Activated CD4-positive, alpha-beta memory T cell treated with anti-CD3 and anti-CD28 coated beads for 36 hours (primary cell): ENCODE measurements at regions of chr14 and their contacts with region 1.

Region 1: DNA sequence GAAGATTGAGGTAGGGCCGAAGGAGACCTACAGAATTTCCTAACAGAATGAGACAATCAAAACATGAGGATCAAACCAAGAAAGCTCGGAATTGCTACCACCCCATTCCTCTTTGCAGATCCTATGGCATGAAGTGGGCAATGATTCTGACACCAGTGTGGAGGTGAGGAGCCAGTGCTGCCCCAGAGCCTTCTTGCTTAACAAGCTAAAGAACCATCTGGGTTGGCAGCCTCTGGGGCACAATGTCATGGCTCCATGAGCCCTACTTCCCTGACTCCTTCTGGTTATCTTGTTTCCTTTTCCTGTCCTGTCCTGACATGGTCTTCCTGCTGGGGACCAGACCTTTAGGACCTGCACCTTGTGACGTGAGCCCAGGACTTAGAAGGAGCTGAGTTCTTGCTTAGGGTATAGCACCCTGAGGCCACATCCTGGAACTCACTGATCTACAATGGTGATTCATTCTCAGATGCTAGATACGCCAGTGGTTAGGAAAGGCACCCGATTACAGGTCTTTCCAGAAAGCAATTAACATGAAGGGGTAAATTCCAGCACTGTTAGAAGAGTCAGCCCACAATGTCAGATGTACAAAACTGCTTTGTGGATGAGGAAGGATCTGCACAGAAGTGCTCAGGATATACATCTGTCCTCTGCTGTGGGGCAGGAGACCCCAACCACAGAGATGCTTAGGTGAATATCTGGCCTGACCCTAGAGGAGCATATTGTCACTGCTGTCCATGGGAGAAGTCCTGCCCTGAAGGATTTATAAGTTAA is 324.2 kb downstream of the ZFP36L1 start:
- DNase-seq: peak; percentile 59
- H3K4me3 Mint-ChIP-seq: no peak overlapping the region
- H3K27ac Mint-ChIP-seq: no peak overlapping the region
- H3K4me1 Mint-ChIP-seq: peaks cover 25% of the 10 kb centered on the region
- H3K27me3 Mint-ChIP-seq: no peaks in the 10 kb centered on the region

Region 2: GRCh38 chr14:68482772-68483395 is 14.3 kb after region 1 on chr14:
- CTCF ChIA-PET with region 1: no interaction called
- POLR2A ChIA-PET with region 1: no interaction called
- intact Hi-C with region 1: loop called (anchors 2 kb)
- DNase-seq: no peak
- H3K4me3 Mint-ChIP-seq: no peak overlapping the region
- H3K27ac Mint-ChIP-seq: no peak overlapping the region
- H3K4me1 Mint-ChIP-seq: peaks cover 42% of the 10 kb centered on the region
- H3K27me3 Mint-ChIP-seq: no peaks in the 10 kb centered on the region